ENCODE measurements at regions of chr6 and their contacts with region 1.

Region 1: GRCh38 chr6:139028658-139029469 is at the start of gene ABRACL:
- DNase-seq: peak; percentile 94
- H3K4me3 Mint-ChIP-seq: no peak within 1 kb of the TSS
- H3K27ac Mint-ChIP-seq: peak within 1 kb of the TSS; percentile 85
- H3K4me1 Mint-ChIP-seq: peaks cover 21% of the 10 kb centered on the region
- H3K27me3 Mint-ChIP-seq: no peaks in the 10 kb centered on the region
- total RNA-seq, gene ABRACL: 131 and 134 TPM in 2 replicates

Region 2: DNA sequence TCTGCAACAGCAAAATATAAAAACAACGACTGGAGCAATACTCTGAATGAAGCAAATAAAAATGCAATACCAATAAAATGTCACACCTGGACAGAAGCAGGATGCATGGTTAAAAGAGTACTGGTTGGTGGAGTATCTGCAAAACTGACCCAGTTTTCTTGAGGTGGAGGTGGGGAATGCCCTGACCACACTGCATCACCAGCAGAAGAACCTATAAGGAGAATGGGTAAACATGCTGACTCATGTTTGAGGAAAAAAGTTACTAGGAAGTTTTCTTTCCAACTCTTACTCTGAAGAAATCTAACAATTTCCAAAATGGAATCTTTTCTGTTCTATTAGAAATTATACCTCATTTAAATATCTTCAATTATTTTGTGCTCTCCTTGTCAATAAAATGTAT is 84.5 kb before region 1 on chr6:
- intact Hi-C with region 1: loop called (anchors 2 kb)
- DNase-seq: peak; percentile 69
- H3K4me3 Mint-ChIP-seq: no peak overlapping the region
- H3K27ac Mint-ChIP-seq: peak overlapping the region; percentile 45
- H3K4me1 Mint-ChIP-seq: peaks cover 40% of the 10 kb centered on the region
- H3K27me3 Mint-ChIP-seq: peaks cover 2% of the 10 kb centered on the region

Region 3: GRCh38 chr6:139099984-139100383 is 71.1 kb after region 1 on chr6:
- intact Hi-C with region 1: loop called (anchors 2 kb)
- DNase-seq: no peak
- H3K4me3 Mint-ChIP-seq: no peak overlapping the region
- H3K27ac Mint-ChIP-seq: peak overlapping the region; percentile 9
- H3K4me1 Mint-ChIP-seq: peaks cover 6% of the 10 kb centered on the region
- H3K27me3 Mint-ChIP-seq: no peaks in the 10 kb centered on the region

Region 4: DNA sequence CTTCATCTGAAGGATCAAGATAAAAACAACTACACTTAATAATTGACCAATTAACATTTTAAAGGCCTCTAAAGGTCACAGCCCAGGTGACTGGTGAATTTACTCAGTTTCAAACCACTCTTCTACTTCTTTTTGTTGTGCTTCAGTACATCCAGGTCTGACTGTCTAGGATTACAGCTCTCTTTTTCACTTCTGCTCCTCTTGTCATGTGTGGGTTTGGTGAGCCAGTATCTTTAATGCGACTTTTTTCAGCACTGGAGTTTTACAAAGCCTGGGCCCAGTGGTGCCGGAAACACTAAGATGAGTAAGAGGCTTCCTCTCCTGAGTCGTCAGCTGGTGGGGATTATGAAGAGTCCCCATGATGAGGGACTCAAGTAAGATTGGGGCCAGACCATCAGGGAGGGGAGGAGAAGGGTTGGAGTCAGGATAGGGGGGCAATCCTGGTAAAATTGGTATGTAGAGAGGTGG is 133.0 kb after region 1 on chr6:
- intact Hi-C with region 1: loop called (anchors 5 kb)
- DNase-seq: peak; percentile 91
- H3K4me3 Mint-ChIP-seq: peak overlapping the region; percentile 80
- H3K27ac Mint-ChIP-seq: peak overlapping the region; percentile 98
- H3K4me1 Mint-ChIP-seq: peaks cover 66% of the 10 kb centered on the region
- H3K27me3 Mint-ChIP-seq: no peaks in the 10 kb centered on the region

Region 5: DNA sequence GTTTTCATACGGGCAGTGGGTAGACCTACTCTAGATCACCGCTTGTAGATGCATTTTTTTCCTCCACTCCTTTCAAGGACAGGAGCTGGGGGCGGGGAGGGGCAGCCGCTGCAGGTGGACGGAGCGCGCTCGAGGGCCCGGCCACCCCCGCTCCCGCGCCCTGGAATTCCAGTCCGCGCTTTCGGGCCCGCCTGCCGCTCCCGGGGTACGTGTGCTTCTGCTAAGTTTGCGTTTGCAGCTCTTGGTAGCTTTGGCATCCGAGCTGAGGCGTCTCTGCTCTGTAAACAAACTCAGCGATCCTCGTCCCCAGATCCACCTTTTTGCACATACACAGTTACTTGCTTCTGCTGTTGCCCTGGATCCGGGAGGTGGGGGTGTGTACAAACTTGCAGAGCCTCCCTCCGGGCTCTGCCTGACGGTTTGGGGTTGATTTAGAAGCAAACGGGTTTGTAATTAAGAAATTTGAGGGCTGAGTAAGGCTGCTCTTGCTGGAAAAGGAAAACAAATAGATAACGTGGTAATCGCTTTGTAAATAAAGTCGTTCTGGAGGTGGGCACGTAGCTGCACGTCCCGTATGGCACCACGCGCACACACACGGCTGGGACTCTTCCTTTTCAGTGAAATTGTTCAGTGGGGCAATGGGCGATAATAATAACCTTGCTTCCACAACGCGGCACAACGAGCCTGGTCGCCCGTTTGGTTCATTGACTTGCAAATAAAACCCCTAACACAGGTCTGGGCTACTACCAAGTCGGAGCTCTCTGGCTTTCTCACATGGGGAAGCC is 346.6 kb after region 1 on chr6:
- intact Hi-C with region 1: loop called (anchors 2 kb)
- DNase-seq: peak; percentile 96
- H3K4me3 Mint-ChIP-seq: peak overlapping the region; percentile 99
- H3K27ac Mint-ChIP-seq: peak overlapping the region; percentile 98
- H3K4me1 Mint-ChIP-seq: peaks cover 32% of the 10 kb centered on the region
- H3K27me3 Mint-ChIP-seq: no peaks in the 10 kb centered on the region

Region 6: DNA sequence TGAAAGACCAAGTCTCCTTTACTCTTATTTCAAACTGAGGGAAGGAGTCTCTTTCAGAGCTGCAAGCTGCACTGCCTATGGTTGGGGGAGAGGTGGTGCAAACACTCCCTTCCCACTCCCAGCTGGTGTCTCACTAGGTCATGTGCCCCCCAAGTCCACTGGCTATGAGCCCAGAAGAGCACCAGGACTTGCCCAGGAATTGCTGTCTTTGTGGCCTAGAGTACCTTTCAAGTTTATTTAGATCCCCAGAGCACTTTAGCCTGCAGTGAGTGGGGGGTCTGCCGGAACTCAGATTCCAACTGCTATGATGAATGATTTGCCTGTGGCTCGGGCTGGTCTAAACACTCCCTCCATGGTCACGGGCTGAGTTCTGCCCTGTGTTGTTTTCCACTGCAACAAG is 538.2 kb after region 1 on chr6:
- intact Hi-C with region 1: no loop called
- DNase-seq: no peak
- H3K4me3 Mint-ChIP-seq: no peak overlapping the region
- H3K27ac Mint-ChIP-seq: peak overlapping the region; percentile 19
- H3K4me1 Mint-ChIP-seq: peaks cover 3% of the 10 kb centered on the region
- H3K27me3 Mint-ChIP-seq: no peaks in the 10 kb centered on the region

Measured in activated CD4-positive, alpha-beta T cell treated with anti-CD3 and anti-CD28 coated beads, Interleukin-2, amount 10 ng/mL, durations not matched to agents 24 days and 14 days (primary cell).